ENCODE measurements at regions of chr12 and their contacts with region 1.

Region 1: DNA sequence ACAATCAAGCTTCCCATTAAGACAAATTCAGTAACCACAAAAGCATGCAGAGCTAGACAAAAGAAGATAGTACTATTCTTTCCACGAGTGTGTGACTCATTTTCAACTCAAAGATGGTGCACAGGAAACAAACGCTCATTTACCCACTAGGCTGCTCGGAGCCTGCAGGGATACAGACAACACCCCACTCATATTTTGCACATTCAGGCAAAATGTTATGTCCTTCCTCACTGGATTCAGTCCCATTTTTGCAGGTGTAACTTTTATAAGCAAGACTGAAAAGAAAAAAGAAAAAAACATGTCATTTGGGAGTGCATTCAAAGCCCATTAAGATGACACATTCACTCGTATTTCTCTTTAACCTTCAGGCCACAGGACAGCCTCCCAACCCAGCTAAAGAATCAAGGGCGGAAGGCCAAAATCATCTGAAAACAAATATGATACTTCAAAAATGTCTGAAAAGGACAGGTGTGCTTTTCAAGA is 147.5 kb upstream of the KRR1 start:
- DNase-seq: peak; percentile 86
- H3K4me3 ChIP-seq: no peak overlapping the region
- H3K27ac ChIP-seq: peak overlapping the region; percentile 98
- H3K4me1 ChIP-seq: peaks cover 66% of the 10 kb centered on the region
- H3K27me3 ChIP-seq: no peaks in the 10 kb centered on the region
- CTCF ChIP-seq: no peak

Region 2: DNA sequence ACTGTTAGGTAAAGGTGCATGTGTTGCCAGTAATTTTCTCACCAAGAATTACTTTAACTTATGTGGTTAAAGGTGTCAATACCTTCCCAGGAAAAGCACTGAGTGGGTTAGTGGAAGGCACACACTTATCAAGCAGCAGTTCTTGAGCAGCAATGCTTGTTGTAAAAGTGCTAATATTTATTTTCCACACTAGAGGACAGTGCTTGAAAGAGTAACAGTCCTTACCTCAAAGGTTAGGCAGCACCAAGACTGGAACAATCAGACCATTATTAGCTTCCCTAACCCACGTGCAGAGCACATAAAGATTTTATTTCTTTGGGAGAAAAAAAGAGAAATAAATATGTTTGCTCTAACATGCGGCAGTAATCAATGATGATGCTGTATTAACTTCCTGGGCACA is 98.8 kb before region 1 on chr12:
- CTCF ChIA-PET with region 1: no interaction called
- dilution Hi-C with region 1: no loop called
- in situ Hi-C with region 1: no loop called
- intact Hi-C with region 1: loop called (anchors 1 kb)
- DNase-seq: peak; percentile 56
- H3K4me3 ChIP-seq: no peak overlapping the region
- H3K27ac ChIP-seq: no peak overlapping the region
- H3K4me1 ChIP-seq: peaks cover 18% of the 10 kb centered on the region
- H3K27me3 ChIP-seq: no peaks in the 10 kb centered on the region
- CTCF ChIP-seq: peak; percentile 48 to 68

Region 3: GRCh38 chr12:75603475-75603874 is 55.5 kb before region 1 on chr12:
- CTCF ChIA-PET with region 1: no interaction called
- dilution Hi-C with region 1: no loop called
- in situ Hi-C with region 1: no loop called
- intact Hi-C with region 1: no loop called
- DNase-seq: peak; percentile 13
- H3K4me3 ChIP-seq: no peak overlapping the region
- H3K27ac ChIP-seq: no peak overlapping the region
- H3K4me1 ChIP-seq: peaks cover 3% of the 10 kb centered on the region
- H3K27me3 ChIP-seq: no peaks in the 10 kb centered on the region
- CTCF ChIP-seq: no peak

Region 4: DNA sequence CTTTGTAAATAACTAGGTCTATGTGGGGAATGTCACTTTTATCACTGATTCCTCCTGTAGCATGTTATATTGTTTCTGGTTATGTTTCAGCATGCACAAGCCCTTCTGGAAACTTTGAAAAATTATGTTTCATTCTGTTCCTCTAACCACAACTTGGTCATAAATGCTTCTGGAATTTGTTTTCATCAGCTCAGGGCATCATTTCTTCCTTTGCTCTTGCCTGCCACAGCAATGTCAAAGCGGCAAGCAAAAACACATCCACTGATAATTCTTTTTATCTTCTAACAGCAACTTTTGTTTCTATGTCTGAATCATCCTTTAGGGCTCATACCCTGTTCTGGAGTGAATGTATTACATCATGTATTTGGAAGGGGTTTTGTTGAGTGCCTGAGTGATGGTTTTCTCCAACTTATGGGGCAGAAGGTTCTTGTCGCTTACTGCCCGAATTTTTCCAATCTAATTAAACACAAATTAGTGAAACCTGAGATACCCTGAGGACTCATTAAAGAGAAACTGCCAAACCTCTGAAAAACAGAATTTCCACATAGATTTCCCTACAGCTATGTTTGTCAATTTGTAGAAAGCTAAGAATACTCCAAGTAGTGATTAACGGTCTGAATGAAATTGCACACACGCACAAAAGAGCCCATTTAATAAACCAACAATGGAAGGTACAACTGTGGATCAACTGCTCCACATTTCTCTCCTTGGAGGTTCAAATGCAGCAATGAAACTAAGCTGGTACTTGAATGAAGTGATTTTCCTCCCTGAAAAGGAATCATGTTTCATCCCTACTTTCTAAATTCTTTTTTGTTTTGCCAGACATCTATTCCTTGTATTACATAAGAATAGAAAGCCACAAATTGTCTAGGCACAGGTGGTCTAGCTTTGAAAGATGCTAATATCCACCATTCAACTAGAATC is 26.0 kb after region 1 on chr12:
- CTCF ChIA-PET with region 1: no interaction called
- dilution Hi-C with region 1: no loop called
- in situ Hi-C with region 1: no loop called
- intact Hi-C with region 1: loop called (anchors 1 kb)
- DNase-seq: peak; percentile 97
- H3K4me3 ChIP-seq: no peak overlapping the region
- H3K27ac ChIP-seq: peak overlapping the region; percentile 92
- H3K4me1 ChIP-seq: peaks cover 25% of the 10 kb centered on the region
- H3K27me3 ChIP-seq: no peaks in the 10 kb centered on the region
- CTCF ChIP-seq: no peak

Region 5: GRCh38 chr12:75784591-75784990 is 125.6 kb after region 1 on chr12:
- CTCF ChIA-PET with region 1: no interaction called
- dilution Hi-C with region 1: no loop called
- in situ Hi-C with region 1: no loop called
- intact Hi-C with region 1: loop called (anchors 2 kb)
- DNase-seq: peak; percentile 91
- H3K4me3 ChIP-seq: no peak overlapping the region
- H3K27ac ChIP-seq: peak overlapping the region; percentile 2
- H3K4me1 ChIP-seq: peaks cover 56% of the 10 kb centered on the region
- H3K27me3 ChIP-seq: no peaks in the 10 kb centered on the region
- CTCF ChIP-seq: no peak

Region 6: GRCh38 chr12:75862692-75863471 is 203.9 kb after region 1 on chr12:
- CTCF ChIA-PET with region 1: no interaction called
- dilution Hi-C with region 1: no loop called
- in situ Hi-C with region 1: no loop called
- intact Hi-C with region 1: loop called (anchors 1 kb)
- DNase-seq: peak; percentile 94
- H3K4me3 ChIP-seq: no peak overlapping the region
- H3K27ac ChIP-seq: peak overlapping the region; percentile 99
- H3K4me1 ChIP-seq: peaks cover 46% of the 10 kb centered on the region
- H3K27me3 ChIP-seq: no peaks in the 10 kb centered on the region
- CTCF ChIP-seq: no peak

Region 7: DNA sequence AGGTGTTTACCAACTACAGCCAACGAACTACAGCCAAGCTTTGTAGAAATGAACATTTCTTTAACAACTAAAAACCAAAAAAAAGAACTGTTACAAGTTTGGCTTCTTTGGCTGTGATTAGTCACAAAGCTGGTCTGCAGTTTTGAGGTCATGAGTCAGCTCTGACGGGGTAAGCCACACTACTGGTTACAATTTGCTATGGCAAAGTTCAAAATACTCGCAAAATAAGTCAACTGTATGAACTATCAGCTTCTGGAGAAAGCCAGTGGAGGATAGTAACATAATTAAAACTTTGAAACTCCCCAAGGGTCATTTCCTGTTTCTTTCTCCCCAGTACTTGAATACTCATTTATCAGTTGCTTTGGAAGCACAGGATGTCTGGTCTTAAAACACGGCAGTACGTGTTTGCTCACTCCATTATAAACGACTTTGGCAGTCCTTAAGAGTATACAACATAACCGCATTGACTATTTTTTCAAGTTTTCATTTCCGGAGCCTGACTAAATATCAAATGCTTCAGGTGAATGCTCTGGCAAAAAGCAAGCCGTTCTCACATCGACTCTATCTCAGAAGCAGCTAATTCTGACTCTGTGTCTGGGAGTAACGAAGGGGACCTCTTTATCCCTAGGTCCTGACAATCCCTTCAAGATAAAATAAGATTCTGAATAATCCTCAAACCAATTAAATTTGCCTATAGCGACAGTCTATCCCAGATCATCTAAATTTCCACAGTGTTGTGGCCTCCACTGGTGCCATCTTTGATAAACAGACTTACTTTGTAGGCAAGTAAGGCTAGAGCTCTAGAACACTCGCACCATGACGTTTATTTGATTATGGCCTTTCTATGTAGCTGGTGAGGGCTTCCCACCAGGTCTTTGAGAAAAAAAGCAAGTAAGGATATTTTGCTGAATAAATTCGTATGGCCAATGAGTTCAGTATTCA is 362.1 kb after region 1 on chr12:
- CTCF ChIA-PET with region 1: no interaction called
- dilution Hi-C with region 1: no loop called
- in situ Hi-C with region 1: loop called in 1 of 2 experiments (anchors 10 kb)
- intact Hi-C with region 1: loop called (anchors 1 kb)
- DNase-seq: peak; percentile 97
- H3K4me3 ChIP-seq: no peak overlapping the region
- H3K27ac ChIP-seq: peak overlapping the region; percentile 99
- H3K4me1 ChIP-seq: peaks cover 64% of the 10 kb centered on the region
- H3K27me3 ChIP-seq: no peaks in the 10 kb centered on the region
- CTCF ChIP-seq: no peak

Region 8: DNA sequence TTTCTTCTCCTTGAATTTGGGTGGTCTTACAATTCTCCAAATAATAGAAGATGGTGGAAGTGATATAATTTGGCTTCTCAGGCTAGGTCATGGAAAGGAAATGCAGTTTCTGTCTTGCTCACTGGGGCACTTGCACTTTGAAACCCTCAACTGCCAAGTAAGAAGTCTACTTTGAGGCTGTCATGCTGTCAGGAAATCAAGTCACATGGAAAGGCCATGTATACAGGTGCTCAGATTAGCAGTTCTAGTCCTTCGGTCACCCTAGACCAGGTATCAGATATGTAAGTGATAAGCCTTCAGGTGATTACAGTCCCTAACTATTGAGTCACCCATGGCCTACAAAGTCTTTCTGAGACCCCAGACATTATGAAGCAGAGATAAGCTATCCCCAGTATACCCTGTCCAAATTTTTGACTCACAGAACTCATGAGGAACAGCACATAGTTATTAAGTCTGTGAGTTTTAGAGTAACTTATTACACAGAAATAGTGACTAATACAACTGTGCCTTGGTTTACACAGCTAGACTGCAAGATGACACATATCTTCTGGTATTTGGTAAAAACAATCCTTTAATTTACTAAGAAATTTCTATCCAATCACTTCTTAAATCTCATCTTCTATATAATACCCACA is 715.6 kb after region 1 on chr12:
- CTCF ChIA-PET with region 1: no interaction called
- dilution Hi-C with region 1: no loop called
- in situ Hi-C with region 1: no loop called
- intact Hi-C with region 1: no loop called
- DNase-seq: peak; percentile 19
- H3K4me3 ChIP-seq: no peak overlapping the region
- H3K27ac ChIP-seq: no peak overlapping the region
- H3K4me1 ChIP-seq: peaks cover 16% of the 10 kb centered on the region
- H3K27me3 ChIP-seq: no peaks in the 10 kb centered on the region
- CTCF ChIP-seq: no peak

Measured in mammary epithelial cell (primary cell).